ENCODE measurements at regions of chr7 and their contacts with region 1.

Region 1: DNA sequence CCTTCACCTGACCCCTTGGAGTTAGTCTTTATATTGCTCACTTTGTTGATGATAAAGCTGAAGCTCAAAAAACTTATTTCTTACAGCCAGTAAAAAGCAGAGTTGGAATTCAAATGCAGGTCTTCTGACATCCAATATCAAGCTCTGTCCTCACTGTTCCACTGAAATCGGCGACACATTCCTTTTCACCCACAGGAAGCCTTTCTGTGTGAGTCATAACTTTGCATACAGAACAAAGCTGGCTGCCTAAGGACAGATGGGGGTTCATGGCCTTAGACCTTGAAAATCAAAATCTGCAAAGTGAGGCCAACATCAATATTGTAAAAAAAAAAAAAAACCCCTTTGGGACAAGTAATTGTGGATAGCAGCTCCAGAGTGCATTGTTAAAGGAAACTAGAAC is 21.8 kb upstream of the AKR1B1 start:
- DNase-seq: peak; percentile 59 to 82
- ATAC-seq: peak; percentile 83 to 86
- H3K4me3 ChIP-seq: no peak overlapping the region
- H3K27ac ChIP-seq: peak overlapping the region; percentile 62 to 67
- H3K4me1 ChIP-seq: peaks cover 60% of the 10 kb centered on the region
- CTCF ChIP-seq: no peak
- EP300 ChIP-seq: no peak
- POLR2A ChIP-seq: no peak
- RAD21 ChIP-seq: peak; percentile 13 to 18; a peak in 1 of 5 replicates

Region 2: GRCh38 chr7:134448700-134449229 is 32.0 kb before region 1 on chr7:
- CTCF ChIA-PET with region 1: interaction called, 50 read pairs
- POLR2A ChIA-PET with region 1: interaction called, 3 read pairs
- DNase-seq: peak; percentile 94 to 97
- ATAC-seq: peak; percentile 58 to 71
- H3K4me3 ChIP-seq: no peak overlapping the region
- H3K27ac ChIP-seq: peak overlapping the region; percentile 94 to 95
- H3K4me1 ChIP-seq: peaks cover 97% of the 10 kb centered on the region
- CTCF ChIP-seq: no peak
- EP300 ChIP-seq: peak in 1 of 2 experiments; percentile 42; a peak in 1 of 5 replicates
- POLR2A ChIP-seq: no peak
- RAD21 ChIP-seq: no peak; a peak in 1 of 5 replicates

Region 3: DNA sequence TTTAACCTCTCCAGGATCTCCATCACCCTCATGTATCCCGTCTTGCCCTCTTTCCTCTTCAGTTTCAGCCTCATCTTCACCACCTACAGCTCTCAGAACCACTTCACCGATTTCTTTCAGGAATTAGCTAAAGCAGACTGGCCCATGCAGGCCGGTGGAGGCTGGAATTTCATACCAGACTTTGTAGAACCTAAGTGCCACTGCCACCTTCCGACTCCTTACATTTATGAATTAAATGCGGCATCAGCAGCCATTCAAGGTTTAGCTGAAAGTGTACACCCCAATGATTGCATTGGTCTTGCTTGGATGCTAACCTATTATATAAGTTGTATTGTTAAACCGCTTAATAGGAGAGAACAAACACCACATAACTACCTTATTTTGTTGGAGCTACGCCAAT is 11.2 kb after region 1 on chr7:
- CTCF ChIA-PET with region 1: interaction called, 25 read pairs
- POLR2A ChIA-PET with region 1: interaction called, 3 read pairs
- DNase-seq: no peak
- ATAC-seq: no peak
- H3K4me3 ChIP-seq: no peak overlapping the region
- H3K27ac ChIP-seq: no peak overlapping the region
- H3K4me1 ChIP-seq: no peaks in the 10 kb centered on the region
- CTCF ChIP-seq: no peak
- EP300 ChIP-seq: no peak
- POLR2A ChIP-seq: no peak
- RAD21 ChIP-seq: no peak

Region 4: DNA sequence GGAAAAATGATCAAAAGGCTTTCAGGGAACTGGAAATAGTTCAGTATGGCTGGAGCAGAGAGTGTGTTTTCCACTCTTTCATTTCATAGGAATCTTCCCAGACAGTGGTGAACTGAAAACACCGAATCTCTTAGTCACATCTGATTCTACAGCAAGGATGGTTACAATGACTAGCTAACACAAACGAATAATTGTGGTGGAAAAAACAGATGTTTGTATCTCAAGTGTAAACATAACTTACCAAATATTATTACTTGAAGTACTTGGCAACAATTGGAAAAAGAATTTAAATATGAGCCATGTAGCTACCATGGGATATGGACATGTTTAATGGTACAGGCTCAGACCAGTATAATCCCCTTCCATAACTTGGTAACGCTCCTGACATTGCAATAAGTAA is 144.8 kb after region 1 on chr7:
- CTCF ChIA-PET with region 1: no interaction called
- POLR2A ChIA-PET with region 1: no interaction called
- DNase-seq: no peak
- ATAC-seq: no peak
- H3K4me3 ChIP-seq: no peak overlapping the region
- H3K27ac ChIP-seq: no peak overlapping the region
- H3K4me1 ChIP-seq: peaks cover 2% of the 10 kb centered on the region
- CTCF ChIP-seq: no peak
- EP300 ChIP-seq: no peak
- POLR2A ChIP-seq: no peak
- RAD21 ChIP-seq: no peak

Measured in A549 (cell line).